A673 (cell line): ENCODE measurements at regions of chr19 and their contacts with region 1.

Region 1: DNA sequence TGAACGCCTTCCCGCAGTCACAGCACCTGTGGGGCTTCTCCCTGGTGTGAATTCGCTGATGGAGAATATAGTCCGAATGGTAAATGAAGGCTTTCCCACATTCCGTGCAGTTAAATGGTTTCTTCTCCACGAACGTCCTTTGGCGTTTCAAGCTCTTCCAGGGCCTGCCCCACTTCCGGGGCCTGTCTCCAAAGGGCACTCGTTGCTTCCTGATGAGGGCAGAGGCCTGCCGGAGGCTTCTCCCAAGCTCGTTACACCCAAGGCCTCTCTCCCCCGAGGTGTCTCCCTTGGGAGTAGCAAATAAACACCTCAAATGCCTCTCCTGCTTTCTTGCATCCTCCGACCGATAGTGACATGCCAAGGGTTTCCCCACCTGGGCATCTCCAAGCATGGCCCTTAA is 34.3 kb downstream of the ZNF473 start:
- DNase-seq: no peak
- H3K4me3 ChIP-seq: no peak overlapping the region
- H3K27ac ChIP-seq: no peak overlapping the region
- H3K4me1 ChIP-seq: no peaks in the 10 kb centered on the region
- H3K27me3 ChIP-seq: no peaks in the 10 kb centered on the region
- CTCF ChIP-seq: no peak

Region 2: GRCh38 chr19:49601482-49602038 is 458.5 kb before region 1 on chr19:
- CTCF ChIA-PET with region 1: no interaction called
- POLR2A ChIA-PET with region 1: no interaction called
- intact Hi-C with region 1: no loop called
- DNase-seq: no peak
- H3K4me3 ChIP-seq: no peak overlapping the region
- H3K27ac ChIP-seq: no peak overlapping the region
- H3K4me1 ChIP-seq: no peaks in the 10 kb centered on the region
- H3K27me3 ChIP-seq: no peaks in the 10 kb centered on the region
- CTCF ChIP-seq: no peak

Region 3: DNA sequence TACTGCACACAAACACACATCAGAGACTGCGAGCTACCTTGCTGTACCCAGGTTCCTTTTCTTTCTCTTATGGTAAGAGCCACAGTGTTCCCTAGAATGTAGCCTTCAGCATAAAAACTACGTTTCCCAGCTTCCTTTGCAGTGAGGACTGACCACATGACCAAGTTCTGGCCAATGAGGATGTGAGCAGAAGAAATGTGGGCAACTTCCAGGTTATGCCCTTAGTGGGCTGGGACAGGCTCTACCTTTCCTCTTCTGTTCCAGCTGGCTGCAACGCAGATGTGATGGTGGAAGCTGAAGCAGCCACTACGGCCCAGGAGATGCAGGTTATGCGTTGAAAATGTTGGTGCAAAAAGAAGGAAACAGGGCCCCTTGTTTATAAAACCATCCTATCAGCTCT is 62.4 kb before region 1 on chr19:
- CTCF ChIA-PET with region 1: no interaction called
- POLR2A ChIA-PET with region 1: interaction called, 15 read pairs
- intact Hi-C with region 1: no loop called
- DNase-seq: peak; percentile 41
- H3K4me3 ChIP-seq: no peak overlapping the region
- H3K27ac ChIP-seq: no peak overlapping the region
- H3K4me1 ChIP-seq: no peaks in the 10 kb centered on the region
- H3K27me3 ChIP-seq: no peaks in the 10 kb centered on the region
- CTCF ChIP-seq: no peak

Region 4: GRCh38 chr19:50368649-50369570 is 308.8 kb after region 1 on chr19:
- CTCF ChIA-PET with region 1: no interaction called
- POLR2A ChIA-PET with region 1: no interaction called
- intact Hi-C with region 1: no loop called
- DNase-seq: peak; percentile 89
- H3K4me3 ChIP-seq: peak overlapping the region; percentile 59
- H3K27ac ChIP-seq: peak overlapping the region; percentile 67
- H3K4me1 ChIP-seq: no peaks in the 10 kb centered on the region
- H3K27me3 ChIP-seq: no peaks in the 10 kb centered on the region
- CTCF ChIP-seq: peak; percentile 86